Posterior cingulate gyrus (tissue), 11 donors: ENCODE measurements at regions of chr1 and their contacts with region 1.

Region 1: GRCh38 chr1:162056043-162056442 is 13.4 kb upstream of the NOS1AP start:
- DNase-seq: peak in 9 of 10 donors; percentile 25 to 94 (median 75)

Region 2: DNA sequence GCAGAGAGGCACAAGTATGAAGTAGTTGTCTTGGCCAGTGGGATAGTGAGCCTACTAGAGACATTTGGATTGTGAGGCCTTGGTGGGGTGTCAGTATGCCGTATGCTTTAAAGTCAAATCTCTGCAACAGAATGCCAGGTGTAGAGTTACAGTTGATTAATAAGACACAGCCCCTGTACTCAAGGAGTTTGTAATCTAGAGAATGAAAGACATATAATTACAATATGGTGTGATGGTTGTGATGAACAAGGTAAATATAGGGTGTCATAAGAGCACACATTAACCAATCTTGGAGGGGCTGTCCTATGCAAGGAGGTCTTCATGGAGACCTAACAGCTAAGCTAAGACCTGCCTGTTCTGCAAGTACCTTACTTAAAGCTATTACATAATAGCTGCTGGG is 176.8 kb before region 1 on chr1:
- intact Hi-C with region 1: no loop called
- DNase-seq: no peak

Region 3: GRCh38 chr1:162230096-162230495 is 174.1 kb after region 1 on chr1:
- intact Hi-C with region 1: loop called (anchors 5 kb)
- DNase-seq: peak in 5 of 10 donors; percentile 22 to 85 (median 46)

Region 4: DNA sequence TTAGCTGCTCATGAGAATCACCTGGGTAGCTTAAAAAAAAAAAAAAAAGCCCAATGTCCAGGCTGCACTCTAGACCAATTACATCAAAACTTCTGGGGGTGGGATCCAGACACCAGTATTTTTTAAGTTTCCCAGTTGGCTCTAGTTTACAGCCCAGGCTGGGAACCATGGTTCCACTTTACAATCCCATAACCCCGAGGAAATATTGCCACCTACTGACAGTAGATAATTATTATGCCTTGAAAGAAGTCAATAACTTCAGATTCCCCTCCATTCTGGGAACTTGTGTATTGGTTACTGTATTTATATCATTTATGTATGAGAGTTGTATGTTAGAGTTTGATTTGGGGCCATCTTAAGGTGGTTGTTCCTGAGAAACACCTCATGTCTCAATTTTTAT is 220.4 kb after region 1 on chr1:
- intact Hi-C with region 1: loop called (anchors 1 kb)
- DNase-seq: no peak

Region 5: GRCh38 chr1:162303002-162303344 is 246.9 kb after region 1 on chr1:
- intact Hi-C with region 1: no loop called
- DNase-seq: no peak

Region 6: DNA sequence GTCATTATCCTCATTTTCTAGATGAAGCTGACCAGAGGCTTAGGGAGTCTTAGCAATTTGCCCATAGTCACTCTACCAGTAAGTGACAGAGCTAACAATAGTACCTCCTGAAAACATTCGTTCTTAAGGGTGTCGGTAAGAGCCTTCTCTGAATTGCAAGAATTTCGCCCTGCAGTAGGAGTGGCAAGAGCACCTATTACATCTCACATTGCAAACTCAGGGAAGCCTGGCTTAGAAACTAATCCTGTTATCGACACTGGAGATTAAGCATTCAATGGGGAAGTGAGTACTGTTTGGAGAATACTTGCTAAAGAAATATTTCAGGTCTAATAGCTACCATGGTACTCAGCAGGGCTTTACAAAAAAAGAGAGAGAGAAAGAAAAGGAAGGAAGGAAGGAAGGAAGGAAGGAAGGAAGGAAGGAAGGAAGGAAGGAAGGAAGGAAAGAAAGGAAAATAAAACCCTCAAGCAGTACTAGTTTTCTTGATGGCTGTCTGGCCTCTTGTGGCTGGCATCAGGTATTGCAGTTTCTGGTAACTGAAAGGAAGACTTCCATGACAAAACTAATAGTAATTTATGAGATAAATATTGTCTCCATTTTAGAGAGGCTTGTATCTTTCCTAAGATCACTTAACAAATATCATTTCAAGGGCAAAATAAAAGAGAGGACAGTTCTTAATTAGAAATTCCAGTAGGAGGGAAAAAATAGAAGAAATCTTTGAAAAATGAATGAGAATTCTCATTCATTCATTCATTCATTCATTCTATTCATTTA is 335.9 kb after region 1 on chr1:
- intact Hi-C with region 1: loop called (anchors 5 kb)
- DNase-seq: peak in 2 of 10 donors; percentile 32 to 43